Psoas muscle (tissue), 8 donors: ENCODE measurements at regions of chr6 and their contacts with region 1.

Region 1: GRCh38 chr6:22145823-22146677 is 150.8 kb downstream of the PRL start:
- DNase-seq: no peak
- ATAC-seq: peak in 3 of 4 donors; percentile 25 to 59 (median 39)
- H3K4me3 ChIP-seq: peak overlapping the region; percentile 66
- H3K27ac ChIP-seq: no peak overlapping the region
- H3K4me1 ChIP-seq: peaks cover 47% of the 10 kb centered on the region
- H3K27me3 ChIP-seq: no peaks in the 10 kb centered on the region
- CTCF ChIP-seq: no peak

Region 2: DNA sequence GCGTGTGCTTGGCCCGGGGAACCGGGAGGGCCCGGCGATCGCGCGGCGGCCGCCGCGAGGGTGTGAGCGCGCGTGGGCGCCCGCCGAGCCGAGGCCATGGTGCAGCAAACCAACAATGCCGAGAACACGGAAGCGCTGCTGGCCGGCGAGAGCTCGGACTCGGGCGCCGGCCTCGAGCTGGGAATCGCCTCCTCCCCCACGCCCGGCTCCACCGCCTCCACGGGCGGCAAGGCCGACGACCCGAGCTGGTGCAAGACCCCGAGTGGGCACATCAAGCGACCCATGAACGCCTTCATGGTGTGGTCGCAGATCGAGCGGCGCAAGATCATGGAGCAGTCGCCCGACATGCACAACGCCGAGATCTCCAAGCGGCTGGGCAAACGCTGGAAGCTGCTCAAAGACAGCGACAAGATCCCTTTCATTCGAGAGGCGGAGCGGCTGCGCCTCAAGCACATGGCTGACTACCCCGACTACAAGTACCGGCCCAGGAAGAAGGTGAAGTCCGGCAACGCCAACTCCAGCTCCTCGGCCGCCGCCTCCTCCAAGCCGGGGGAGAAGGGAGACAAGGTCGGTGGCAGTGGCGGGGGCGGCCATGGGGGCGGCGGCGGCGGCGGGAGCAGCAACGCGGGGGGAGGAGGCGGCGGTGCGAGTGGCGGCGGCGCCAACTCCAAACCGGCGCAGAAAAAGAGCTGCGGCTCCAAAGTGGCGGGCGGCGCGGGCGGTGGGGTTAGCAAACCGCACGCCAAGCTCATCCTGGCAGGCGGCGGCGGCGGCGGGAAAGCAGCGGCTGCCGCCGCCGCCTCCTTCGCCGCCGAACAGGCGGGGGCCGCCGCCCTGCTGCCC is 551.4 kb before region 1 on chr6:
- intact Hi-C with region 1: loop called in 1 of 2 experiments (anchors 5 kb)
- DNase-seq: peak; percentile 56 to 73
- ATAC-seq: peak; percentile 47 to 59 (median 52)
- H3K4me3 ChIP-seq: peak overlapping the region; percentile 88
- H3K27ac ChIP-seq: peak overlapping the region; percentile 84
- H3K4me1 ChIP-seq: peaks cover 13% of the 10 kb centered on the region
- H3K27me3 ChIP-seq: no peaks in the 10 kb centered on the region
- CTCF ChIP-seq: no peak

Region 3: GRCh38 chr6:21953831-21954801 is 191.9 kb before region 1 on chr6:
- intact Hi-C with region 1: loop called in 1 of 2 experiments (anchors 10 kb)
- DNase-seq: no peak
- ATAC-seq: peak in 1 of 4 donors; percentile 28
- H3K4me3 ChIP-seq: no peak overlapping the region
- H3K27ac ChIP-seq: peak overlapping the region; percentile 32
- H3K4me1 ChIP-seq: peaks cover 14% of the 10 kb centered on the region
- H3K27me3 ChIP-seq: no peaks in the 10 kb centered on the region
- CTCF ChIP-seq: no peak

Region 4: GRCh38 chr6:22448291-22448711 is 302.3 kb after region 1 on chr6:
- intact Hi-C with region 1: loop called in 1 of 2 experiments (anchors 10 kb)
- DNase-seq: no peak
- ATAC-seq: no peak
- H3K4me3 ChIP-seq: no peak overlapping the region
- H3K27ac ChIP-seq: no peak overlapping the region
- H3K4me1 ChIP-seq: peaks cover 41% of the 10 kb centered on the region
- H3K27me3 ChIP-seq: no peaks in the 10 kb centered on the region
- CTCF ChIP-seq: no peak